ENCODE measurements at regions of chr2 and their contacts with region 1.

Region 1: DNA sequence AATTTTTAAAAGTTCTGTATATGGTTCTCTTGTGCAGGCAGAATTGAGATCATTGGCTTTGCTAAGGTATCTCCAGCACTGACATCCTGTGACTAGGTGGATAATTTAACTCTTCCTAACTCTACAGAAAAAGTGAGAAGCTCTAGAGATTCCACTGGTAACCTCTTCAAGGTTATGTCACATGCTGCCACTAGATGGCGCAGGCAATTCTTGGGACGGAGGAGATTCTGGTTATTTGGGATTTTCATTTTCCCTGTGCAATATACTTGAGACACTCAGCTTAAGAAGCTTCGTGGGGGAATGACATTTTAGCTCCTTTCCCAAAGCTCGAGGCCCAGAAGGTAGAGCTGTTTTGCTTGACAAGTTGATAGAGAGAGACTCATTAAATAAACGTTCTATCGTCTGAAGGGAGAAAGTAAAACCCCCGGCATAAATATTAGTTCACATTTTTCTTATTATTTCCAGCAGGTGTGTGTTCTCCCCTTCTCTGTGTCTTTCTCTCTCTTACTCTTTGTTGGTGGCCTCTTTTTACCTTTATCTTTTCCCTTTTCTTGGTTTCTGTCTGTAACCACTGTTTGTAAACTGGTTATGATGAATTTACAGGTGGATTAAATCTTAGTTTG is 26.6 kb upstream of the LANCL1 start:
- DNase-seq: peak; percentile 9 to 65
- H3K4me3 ChIP-seq: no peak overlapping the region
- H3K27ac ChIP-seq: no peak overlapping the region
- H3K4me1 ChIP-seq: peaks cover 0 to 3% (median 0%) of the 10 kb centered on the region in 4 experiments; a peak in 1 of 7 replicates
- H3K27me3 ChIP-seq: no peaks in the 10 kb centered on the region
- CTCF ChIP-seq: peak in 2 of 3 experiments; percentile 66 to 86; a peak in 3 of 4 replicates
- EP300 ChIP-seq: no peak
- POLR2A ChIP-seq: no peak
- RAD21 ChIP-seq: peak; percentile 69 to 76

Region 2: DNA sequence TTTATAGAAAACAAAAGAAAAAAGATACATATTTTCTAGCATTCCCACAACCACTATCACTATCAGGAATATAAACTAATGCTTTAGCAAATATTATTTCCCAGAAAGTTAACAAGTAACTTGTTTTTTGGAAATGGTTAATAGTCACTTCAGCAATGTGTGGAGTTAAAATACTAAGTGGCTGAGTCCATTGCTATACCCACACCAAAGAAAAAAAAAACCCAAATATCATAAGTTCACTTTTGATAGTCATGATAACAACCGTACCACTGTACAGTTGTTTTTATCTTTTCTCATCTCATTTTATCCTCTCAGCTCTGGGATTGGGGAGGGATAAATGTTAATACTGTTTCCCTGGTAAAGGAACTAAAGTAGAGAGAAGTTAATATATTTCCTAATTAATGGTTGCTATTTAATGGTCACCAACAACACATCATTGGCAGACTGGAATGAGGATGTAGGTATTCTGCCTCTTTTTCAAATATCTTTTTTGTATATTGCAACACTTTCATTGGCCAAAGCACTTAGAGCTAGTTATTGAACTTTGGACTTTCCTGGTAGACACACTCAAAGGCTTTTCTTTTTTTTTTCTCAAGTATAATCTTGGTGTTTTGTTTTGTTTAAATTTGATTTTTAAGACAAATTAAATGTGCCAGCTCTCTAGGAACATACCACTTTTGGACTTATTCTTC is 313.5 kb before region 1 on chr2:
- CTCF ChIA-PET with region 1: no interaction called
- POLR2A ChIA-PET with region 1: no interaction called
- DNase-seq: no peak
- H3K4me3 ChIP-seq: no peak overlapping the region
- H3K27ac ChIP-seq: no peak overlapping the region
- H3K4me1 ChIP-seq: no peaks in the 10 kb centered on the region
- H3K27me3 ChIP-seq: no peaks in the 10 kb centered on the region
- CTCF ChIP-seq: no peak
- EP300 ChIP-seq: no peak
- POLR2A ChIP-seq: no peak
- RAD21 ChIP-seq: no peak

Region 3: DNA sequence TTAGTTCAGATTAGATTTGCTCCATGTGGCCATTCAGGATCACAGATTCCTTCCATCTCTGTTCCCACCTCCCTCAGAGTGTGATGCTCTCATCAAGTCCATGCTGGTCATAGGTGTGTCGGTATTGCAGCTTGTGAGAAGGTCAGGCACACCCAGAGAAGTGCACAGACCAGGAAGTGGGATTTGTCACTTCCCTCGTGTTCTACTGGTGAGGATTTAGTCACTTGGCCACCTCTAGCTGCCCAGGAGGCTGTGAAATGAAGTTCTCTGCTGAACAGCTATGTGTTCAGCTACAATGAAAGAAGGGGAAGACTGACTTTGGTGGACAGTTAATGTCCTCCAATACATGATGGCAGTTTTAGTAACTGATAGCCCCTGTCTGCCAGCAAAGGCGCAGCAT is 23.0 kb before region 1 on chr2:
- CTCF ChIA-PET with region 1: interaction called, 14 read pairs
- POLR2A ChIA-PET with region 1: no interaction called
- DNase-seq: no peak
- H3K4me3 ChIP-seq: no peak overlapping the region
- H3K27ac ChIP-seq: no peak overlapping the region
- H3K4me1 ChIP-seq: peaks cover 0 to 6% (median 1%) of the 10 kb centered on the region in 4 experiments; a peak in 3 of 7 replicates
- H3K27me3 ChIP-seq: no peaks in the 10 kb centered on the region
- CTCF ChIP-seq: no peak
- EP300 ChIP-seq: no peak
- POLR2A ChIP-seq: no peak
- RAD21 ChIP-seq: no peak

Region 4: DNA sequence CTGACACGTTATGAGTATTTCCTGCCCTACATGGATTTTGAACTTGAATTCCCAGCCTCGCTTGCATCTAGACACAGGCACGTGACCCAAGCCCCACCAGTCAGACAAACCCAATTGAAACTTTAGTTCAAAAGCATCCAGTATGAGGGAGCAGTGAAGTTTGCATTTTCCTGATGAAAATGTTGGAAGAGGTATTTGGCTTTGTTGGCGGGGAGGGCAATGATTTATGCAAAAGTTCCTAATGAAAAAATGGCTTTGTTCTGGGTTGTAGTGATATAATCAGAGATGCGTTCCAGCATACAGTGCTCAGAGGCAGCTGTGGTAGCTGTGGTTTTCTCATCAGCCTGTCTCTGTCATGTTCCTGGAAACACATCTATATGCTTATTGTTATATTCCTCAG is 16.5 kb after region 1 on chr2:
- CTCF ChIA-PET with region 1: interaction called, 16 read pairs
- POLR2A ChIA-PET with region 1: no interaction called
- DNase-seq: no peak
- H3K4me3 ChIP-seq: no peak overlapping the region
- H3K27ac ChIP-seq: no peak overlapping the region
- H3K4me1 ChIP-seq: no peaks in the 10 kb centered on the region
- H3K27me3 ChIP-seq: peaks cover 0 to 1% (median 0%) of the 10 kb centered on the region in 4 experiments; a peak in 1 of 7 replicates
- CTCF ChIP-seq: no peak
- EP300 ChIP-seq: no peak
- POLR2A ChIP-seq: no peak
- RAD21 ChIP-seq: no peak

Region 5: GRCh38 chr2:210534879-210535278 is 31.8 kb after region 1 on chr2:
- CTCF ChIA-PET with region 1: interaction called, 19 read pairs
- POLR2A ChIA-PET with region 1: no interaction called
- DNase-seq: no peak
- H3K4me3 ChIP-seq: no peak overlapping the region
- H3K27ac ChIP-seq: no peak overlapping the region
- H3K4me1 ChIP-seq: peaks cover 0 to 10% (median 4%) of the 10 kb centered on the region in 4 experiments; a peak in 5 of 7 replicates
- H3K27me3 ChIP-seq: no peaks in the 10 kb centered on the region
- CTCF ChIP-seq: no peak
- EP300 ChIP-seq: no peak
- POLR2A ChIP-seq: no peak
- RAD21 ChIP-seq: no peak

Region 6: DNA sequence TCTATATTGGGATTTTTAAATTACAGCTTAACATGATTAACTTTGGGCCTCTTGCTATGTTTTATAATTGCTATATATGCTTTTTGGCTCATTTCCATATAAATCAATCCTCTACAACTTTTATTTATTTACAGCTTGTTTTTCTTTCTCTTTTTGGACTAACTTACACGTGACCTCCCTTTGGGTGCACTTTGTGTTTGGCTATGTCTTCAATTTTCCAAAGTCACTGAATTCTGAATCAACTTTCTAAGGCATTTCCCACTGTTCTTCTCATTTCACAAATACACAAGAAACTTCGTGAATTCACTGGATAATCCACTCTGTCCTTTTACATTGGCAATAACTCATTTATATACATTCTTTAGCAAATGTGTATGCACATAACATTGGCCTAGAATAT is 47.9 kb after region 1 on chr2:
- CTCF ChIA-PET with region 1: interaction called, 11 read pairs
- POLR2A ChIA-PET with region 1: no interaction called
- DNase-seq: no peak
- H3K4me3 ChIP-seq: no peak overlapping the region
- H3K27ac ChIP-seq: no peak overlapping the region
- H3K4me1 ChIP-seq: peaks cover 0 to 2% (median 0%) of the 10 kb centered on the region in 4 experiments; a peak in 1 of 7 replicates
- H3K27me3 ChIP-seq: no peaks in the 10 kb centered on the region
- CTCF ChIP-seq: no peak
- EP300 ChIP-seq: no peak
- POLR2A ChIP-seq: no peak
- RAD21 ChIP-seq: no peak

Region 7: DNA sequence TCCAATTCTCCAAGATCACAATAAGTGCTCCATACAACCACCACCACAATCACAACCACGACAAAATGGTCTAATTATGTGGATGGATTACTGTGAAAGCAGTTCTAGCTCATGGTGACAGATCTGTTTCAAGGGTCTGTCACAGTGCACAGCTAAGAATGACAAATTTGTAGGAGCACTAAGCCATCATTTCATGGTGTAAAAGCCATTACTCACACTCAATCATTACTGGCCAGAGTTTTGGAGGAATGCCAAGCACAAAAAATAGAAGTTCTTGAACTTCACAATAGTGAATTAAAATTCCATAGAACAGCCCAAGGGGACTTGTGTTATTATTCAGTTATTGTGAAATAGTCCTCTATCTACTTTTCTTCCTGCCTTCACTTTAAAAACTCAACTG is 55.6 kb after region 1 on chr2:
- CTCF ChIA-PET with region 1: interaction called, 11 read pairs
- POLR2A ChIA-PET with region 1: no interaction called
- DNase-seq: no peak
- H3K4me3 ChIP-seq: no peak overlapping the region
- H3K27ac ChIP-seq: no peak overlapping the region
- H3K4me1 ChIP-seq: peaks cover 0 to 5% (median 2%) of the 10 kb centered on the region in 4 experiments; a peak in 3 of 7 replicates
- H3K27me3 ChIP-seq: no peaks in the 10 kb centered on the region
- CTCF ChIP-seq: no peak
- EP300 ChIP-seq: no peak
- POLR2A ChIP-seq: no peak
- RAD21 ChIP-seq: no peak

Region 8: GRCh38 chr2:210606001-210606400 is 102.9 kb after region 1 on chr2:
- CTCF ChIA-PET with region 1: no interaction called
- POLR2A ChIA-PET with region 1: no interaction called
- DNase-seq: no peak
- H3K4me3 ChIP-seq: no peak overlapping the region
- H3K27ac ChIP-seq: no peak overlapping the region
- H3K4me1 ChIP-seq: no peaks in the 10 kb centered on the region
- H3K27me3 ChIP-seq: no peaks in the 10 kb centered on the region
- CTCF ChIP-seq: no peak
- EP300 ChIP-seq: no peak
- POLR2A ChIP-seq: no peak
- RAD21 ChIP-seq: no peak

Measured in H1 (cell line).